Naive thymus-derived CD4-positive, alpha-beta T cell (primary cell): ENCODE measurements at regions of chr11 and their contacts with region 1.

Region 1: GRCh38 chr11:62394825-62395538 is 23.9 kb upstream of the SCGB1A1 start:
- DNase-seq: peak in 7 of 9 donors; percentile 37 to 66 (median 54)
- ATAC-seq: peak; percentile 85
- H3K4me3 ChIP-seq: no peak overlapping the region
- H3K4me3 Mint-ChIP-seq: no peak overlapping the region
- H3K27ac ChIP-seq: no peak overlapping the region
- H3K27ac Mint-ChIP-seq: peak overlapping the region in 3 of 9 donors; percentile 23 to 74 (median 65)
- H3K4me1 ChIP-seq: peaks cover 0 to 13% of the 10 kb centered on the region in 2 donors
- H3K4me1 Mint-ChIP-seq: peaks cover 11 to 34% (median 22%) of the 10 kb centered on the region in 7 donors
- H3K27me3 ChIP-seq: no peaks in the 10 kb centered on the region
- H3K27me3 Mint-ChIP-seq: no peaks in the 10 kb centered on the region

Region 2: DNA sequence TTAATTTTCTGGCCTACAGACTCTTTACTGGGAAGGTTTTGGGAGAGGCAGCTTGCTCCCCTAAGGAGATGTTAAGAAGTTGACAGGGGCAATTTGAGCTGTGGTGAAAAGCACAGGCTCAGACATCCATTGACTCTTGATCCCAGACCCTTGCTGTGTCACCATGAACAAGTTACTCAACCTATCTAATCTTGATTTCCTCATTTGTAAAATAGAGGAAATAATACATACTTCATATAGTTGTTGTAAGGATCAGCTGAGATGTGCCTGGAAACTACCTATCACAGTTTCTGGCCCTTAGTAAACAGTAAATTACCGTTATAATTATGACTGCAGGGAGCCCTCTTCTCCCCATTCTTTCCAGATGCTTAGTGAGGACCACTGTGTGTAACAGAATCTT is 79.6 kb before region 1 on chr11:
- CTCF ChIA-PET with region 1: no interaction called
- POLR2A ChIA-PET with region 1: no interaction called
- intact Hi-C with region 1: no loop called
- DNase-seq: no peak
- ATAC-seq: peak; percentile 43
- H3K4me3 ChIP-seq: no peak overlapping the region
- H3K4me3 Mint-ChIP-seq: no peak overlapping the region
- H3K27ac ChIP-seq: no peak overlapping the region
- H3K27ac Mint-ChIP-seq: no peak overlapping the region
- H3K4me1 ChIP-seq: no peaks in the 10 kb centered on the region
- H3K4me1 Mint-ChIP-seq: peaks cover 0 to 16% (median 13%) of the 10 kb centered on the region in 7 donors
- H3K27me3 ChIP-seq: no peaks in the 10 kb centered on the region
- H3K27me3 Mint-ChIP-seq: peaks cover 17 to 55% (median 21%) of the 10 kb centered on the region in 5 donors

Region 3: DNA sequence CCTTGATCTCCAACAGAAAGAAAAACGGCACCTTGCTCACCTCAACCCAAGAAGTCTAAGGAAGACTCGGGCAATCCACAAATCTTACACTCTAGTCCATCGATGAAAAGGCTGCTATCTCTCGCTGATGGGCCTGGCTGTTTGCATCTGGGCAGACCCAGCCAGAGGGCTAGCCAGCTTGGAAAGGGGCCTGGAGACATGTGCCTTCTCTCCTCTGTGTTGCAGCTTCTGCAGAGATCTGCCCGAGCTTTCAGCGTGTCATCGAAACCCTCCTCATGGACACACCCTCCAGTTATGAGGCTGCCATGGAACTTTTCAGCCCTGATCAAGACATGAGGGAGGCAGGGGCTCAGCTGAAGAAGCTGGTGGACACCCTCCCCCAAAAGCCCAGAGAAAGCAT is 27.0 kb after region 1 on chr11:
- CTCF ChIA-PET with region 1: interaction called, 23 read pairs
- POLR2A ChIA-PET with region 1: no interaction called
- intact Hi-C with region 1: loop called (anchors 1 to 2 kb)
- DNase-seq: no peak
- ATAC-seq: no peak
- H3K4me3 ChIP-seq: no peak overlapping the region
- H3K4me3 Mint-ChIP-seq: no peak overlapping the region
- H3K27ac ChIP-seq: no peak overlapping the region
- H3K27ac Mint-ChIP-seq: peak overlapping the region in 1 of 9 donors; percentile 20
- H3K4me1 ChIP-seq: peaks cover 9 to 11% of the 10 kb centered on the region in 2 donors
- H3K4me1 Mint-ChIP-seq: peaks cover 6 to 21% (median 12%) of the 10 kb centered on the region in 7 donors
- H3K27me3 ChIP-seq: no peaks in the 10 kb centered on the region
- H3K27me3 Mint-ChIP-seq: peaks cover 0 to 7% (median 0%) of the 10 kb centered on the region in 5 donors

Region 4: DNA sequence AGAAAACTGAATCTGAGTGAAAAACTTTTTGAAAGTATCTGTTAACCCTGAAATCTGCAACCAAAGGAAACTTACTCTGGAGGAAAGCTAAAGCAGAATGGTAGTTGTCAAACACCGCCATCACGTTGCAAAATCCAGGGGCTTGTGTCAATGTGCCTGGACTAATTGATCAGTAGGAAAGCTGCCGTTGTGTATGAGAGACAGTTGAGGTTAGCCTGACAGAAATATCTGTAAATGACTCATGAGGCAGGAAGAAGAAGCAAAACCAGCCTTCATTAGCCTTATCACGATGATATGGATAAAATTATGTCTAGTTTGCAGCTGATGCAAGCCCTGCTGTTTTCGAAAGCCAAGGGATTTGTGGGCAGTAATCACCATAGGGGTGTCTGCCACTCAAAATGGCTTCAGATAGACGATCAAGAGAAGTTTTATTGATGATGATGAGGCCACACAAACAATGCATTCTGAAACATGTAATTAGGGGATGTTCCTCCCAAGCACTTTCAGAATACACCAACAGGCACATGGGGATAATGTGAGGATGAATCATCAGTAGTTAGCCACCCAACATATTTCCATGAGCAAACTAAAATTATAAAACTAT is 32.8 kb after region 1 on chr11:
- CTCF ChIA-PET with region 1: interaction called, 23 read pairs
- POLR2A ChIA-PET with region 1: no interaction called
- intact Hi-C with region 1: loop called (anchors 1 to 2 kb)
- DNase-seq: peak in 1 of 9 donors; percentile 34
- ATAC-seq: peak; percentile 54
- H3K4me3 ChIP-seq: no peak overlapping the region
- H3K4me3 Mint-ChIP-seq: peak overlapping the region in 3 of 10 donors; percentile 19 to 61 (median 43)
- H3K27ac ChIP-seq: no peak overlapping the region
- H3K27ac Mint-ChIP-seq: peak overlapping the region in 6 of 9 donors; percentile 26 to 91 (median 87)
- H3K4me1 ChIP-seq: peaks cover 19 to 24% of the 10 kb centered on the region in 2 donors
- H3K4me1 Mint-ChIP-seq: peaks cover 24 to 65% (median 32%) of the 10 kb centered on the region in 7 donors
- H3K27me3 ChIP-seq: no peaks in the 10 kb centered on the region
- H3K27me3 Mint-ChIP-seq: peaks cover 0 to 5% (median 0%) of the 10 kb centered on the region in 5 donors

Region 5: GRCh38 chr11:62542750-62543567 is 148.0 kb after region 1 on chr11:
- CTCF ChIA-PET with region 1: interaction called, 13 read pairs
- POLR2A ChIA-PET with region 1: no interaction called
- intact Hi-C with region 1: loop called (anchors 1 kb)
- DNase-seq: peak; percentile 37 to 84 (median 66)
- ATAC-seq: peak; percentile 61
- H3K4me3 ChIP-seq: peak overlapping the region; percentile 87
- H3K4me3 Mint-ChIP-seq: peak overlapping the region; percentile 48 to 100 (median 75)
- H3K27ac ChIP-seq: peak overlapping the region; percentile 84
- H3K27ac Mint-ChIP-seq: peak overlapping the region; percentile 2 to 95 (median 70)
- H3K4me1 ChIP-seq: peaks cover 39 to 56% of the 10 kb centered on the region in 2 donors
- H3K4me1 Mint-ChIP-seq: peaks cover 36 to 82% (median 63%) of the 10 kb centered on the region in 7 donors
- H3K27me3 ChIP-seq: no peaks in the 10 kb centered on the region
- H3K27me3 Mint-ChIP-seq: peaks cover 0 to 5% (median 0%) of the 10 kb centered on the region in 5 donors

Region 6: GRCh38 chr11:62694455-62695167 is 299.6 kb after region 1 on chr11:
- CTCF ChIA-PET with region 1: interaction called, 4 read pairs
- POLR2A ChIA-PET with region 1: no interaction called
- intact Hi-C with region 1: loop called in 1 of 2 experiments (anchors 1 kb)
- DNase-seq: peak; percentile 50 to 80 (median 70)
- ATAC-seq: peak; percentile 93
- H3K4me3 ChIP-seq: no peak overlapping the region
- H3K4me3 Mint-ChIP-seq: peak overlapping the region in 1 of 10 donors; percentile 14
- H3K27ac ChIP-seq: no peak overlapping the region
- H3K27ac Mint-ChIP-seq: peak overlapping the region in 5 of 9 donors; percentile 1 to 78 (median 18)
- H3K4me1 ChIP-seq: peaks cover 0 to 6% of the 10 kb centered on the region in 2 donors
- H3K4me1 Mint-ChIP-seq: peaks cover 0 to 8% (median 6%) of the 10 kb centered on the region in 7 donors
- H3K27me3 ChIP-seq: no peaks in the 10 kb centered on the region
- H3K27me3 Mint-ChIP-seq: no peaks in the 10 kb centered on the region

Region 7: GRCh38 chr11:62911137-62912130 is 516.5 kb after region 1 on chr11:
- CTCF ChIA-PET with region 1: no interaction called
- POLR2A ChIA-PET with region 1: no interaction called
- intact Hi-C with region 1: no loop called
- DNase-seq: no peak
- ATAC-seq: no peak
- H3K4me3 ChIP-seq: no peak overlapping the region
- H3K4me3 Mint-ChIP-seq: no peak overlapping the region
- H3K27ac ChIP-seq: no peak overlapping the region
- H3K27ac Mint-ChIP-seq: no peak overlapping the region
- H3K4me1 ChIP-seq: no peaks in the 10 kb centered on the region
- H3K4me1 Mint-ChIP-seq: peaks cover 0 to 4% (median 0%) of the 10 kb centered on the region in 7 donors
- H3K27me3 ChIP-seq: no peaks in the 10 kb centered on the region
- H3K27me3 Mint-ChIP-seq: peaks cover 0 to 19% (median 0%) of the 10 kb centered on the region in 5 donors